ENCODE measurements at regions of chr6 and their contacts with region 1.

Region 1: DNA sequence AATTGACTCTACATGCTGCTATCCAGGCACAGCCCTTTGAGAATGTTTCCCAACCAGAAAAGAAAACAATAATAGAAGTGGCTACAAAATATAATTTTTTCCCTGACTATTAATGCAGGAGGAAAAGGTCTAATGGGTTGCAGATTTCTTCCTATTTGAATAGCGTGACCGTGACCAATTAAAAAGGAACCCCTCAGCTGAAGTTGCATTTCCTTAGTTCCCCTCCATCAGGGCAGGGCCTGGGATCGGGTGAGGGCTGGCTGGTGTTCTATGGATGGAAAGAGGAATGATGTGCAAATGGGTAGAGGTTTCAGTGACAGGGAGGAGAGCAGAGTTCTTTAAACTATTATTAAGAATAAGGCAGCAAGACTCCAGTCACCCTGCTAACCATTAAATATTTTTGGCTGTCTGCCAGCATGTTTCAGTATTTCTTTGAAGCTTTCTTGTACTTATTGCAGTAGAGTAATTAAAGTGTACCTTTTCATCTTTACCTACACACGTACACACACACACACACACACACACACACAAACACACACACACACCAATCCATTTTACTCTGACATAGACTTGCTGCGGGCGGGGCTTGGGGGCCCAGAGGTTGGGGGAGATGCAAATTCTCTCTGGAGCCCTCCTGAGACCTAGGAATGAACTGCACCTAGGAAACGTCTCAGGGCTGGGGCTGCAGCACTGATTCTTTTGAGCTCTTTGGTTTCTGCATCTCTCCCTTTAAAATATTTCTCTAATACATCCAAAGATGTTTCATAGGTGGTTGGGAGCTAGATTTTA is 154.8 kb upstream of the SLC35B3 start:
- DNase-seq: no peak
- ATAC-seq: no peak
- H3K4me3 ChIP-seq: no peak overlapping the region
- H3K4me3 Mint-ChIP-seq: no peak overlapping the region
- H3K27ac ChIP-seq: no peak overlapping the region
- H3K27ac Mint-ChIP-seq: no peak overlapping the region
- H3K4me1 ChIP-seq: no peaks in the 10 kb centered on the region
- H3K4me1 Mint-ChIP-seq: no peaks in the 10 kb centered on the region
- H3K27me3 ChIP-seq: no peaks in the 10 kb centered on the region
- H3K27me3 Mint-ChIP-seq: peaks cover 0 to 5% (median 0%) of the 10 kb centered on the region in 5 donors

Region 2: DNA sequence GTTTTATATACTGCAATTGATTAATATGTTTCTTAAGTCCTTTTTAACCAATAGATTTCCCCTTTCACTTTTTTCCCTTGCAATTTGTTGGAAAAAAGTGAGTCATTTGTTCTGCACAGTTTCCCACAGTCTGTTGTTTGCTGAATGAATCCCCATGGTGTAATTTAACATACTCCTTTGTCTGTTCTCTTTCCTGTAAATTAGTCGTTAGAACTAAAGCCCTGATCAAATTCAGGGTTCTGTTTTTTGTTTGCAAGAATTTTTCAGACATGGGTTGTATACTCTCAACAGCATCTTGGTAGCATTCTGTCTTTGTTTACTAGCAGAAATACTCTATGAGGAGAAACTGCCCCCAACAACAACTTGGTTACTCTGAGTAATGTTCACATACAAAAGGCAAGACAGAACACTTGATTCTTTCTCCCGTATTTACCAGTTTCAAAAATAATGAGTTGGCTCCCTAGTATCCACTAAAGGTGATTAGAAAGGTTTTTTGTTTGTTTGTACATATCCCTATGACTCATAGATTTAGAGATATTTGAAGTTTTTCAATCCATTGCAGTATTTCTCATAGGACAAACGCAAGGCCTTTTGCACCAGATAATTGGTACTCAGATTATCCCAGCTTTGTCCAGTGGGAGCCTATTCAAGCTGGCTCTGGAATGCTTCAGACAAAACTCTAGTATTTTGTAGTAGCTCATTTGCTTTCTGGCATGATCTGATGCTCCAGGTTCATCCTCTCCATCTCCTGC is 542.4 kb before region 1 on chr6:
- CTCF ChIA-PET with region 1: no interaction called
- POLR2A ChIA-PET with region 1: interaction called, 10 read pairs
- intact Hi-C with region 1: no loop called
- DNase-seq: no peak
- ATAC-seq: no peak
- H3K4me3 ChIP-seq: no peak overlapping the region
- H3K4me3 Mint-ChIP-seq: no peak overlapping the region
- H3K27ac ChIP-seq: no peak overlapping the region
- H3K27ac Mint-ChIP-seq: no peak overlapping the region
- H3K4me1 ChIP-seq: no peaks in the 10 kb centered on the region
- H3K4me1 Mint-ChIP-seq: peaks cover 0 to 25% (median 5%) of the 10 kb centered on the region in 7 donors
- H3K27me3 ChIP-seq: no peaks in the 10 kb centered on the region
- H3K27me3 Mint-ChIP-seq: no peaks in the 10 kb centered on the region